Activated T-helper 1 cell treated with anti-CD3 and anti-CD28 coated beads, Interleukin-12 subunit alpha, Interleukin-12 subunit beta, Interleukin-2, Interleukin-4 antibody, amounts not matched to agents 30 ng/mL and 10 ng/mL and 1 ng/mL, durations not matched to agents 14 hours and 24 hours and 36 hours (primary cell): ENCODE measurements at regions of chr12 and their contacts with region 1.

Region 1: GRCh38 chr12:62301080-62301798 is 41.0 kb downstream of the USP15 start:
- DNase-seq: no peak
- H3K4me3 Mint-ChIP-seq: no peak overlapping the region
- H3K27ac Mint-ChIP-seq: peak overlapping the region; percentile 40
- H3K4me1 Mint-ChIP-seq: peaks cover 52% of the 10 kb centered on the region
- H3K27me3 Mint-ChIP-seq: no peaks in the 10 kb centered on the region

Region 2: DNA sequence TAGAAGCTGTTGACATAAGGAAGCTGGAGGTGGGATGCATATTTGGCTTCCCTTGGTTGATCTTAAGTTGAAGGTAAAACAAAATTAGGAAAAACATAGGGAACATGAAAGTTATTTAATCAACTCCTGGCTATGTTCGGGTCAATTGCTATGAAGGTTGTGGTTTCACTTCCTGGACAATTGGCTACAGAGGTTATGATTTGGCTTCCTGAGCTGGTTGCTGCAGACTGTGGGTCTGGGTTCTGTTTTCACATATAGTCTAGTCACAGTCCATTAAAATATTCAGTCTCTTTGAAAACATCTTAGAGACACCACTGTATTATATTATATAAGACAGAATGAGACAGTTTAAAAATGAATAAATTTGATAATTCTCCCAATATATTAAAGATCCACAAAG is 936.2 kb before region 1 on chr12:
- intact Hi-C with region 1: no loop called
- DNase-seq: no peak
- H3K4me3 Mint-ChIP-seq: no peak overlapping the region
- H3K27ac Mint-ChIP-seq: no peak overlapping the region
- H3K4me1 Mint-ChIP-seq: no peaks in the 10 kb centered on the region
- H3K27me3 Mint-ChIP-seq: no peaks in the 10 kb centered on the region

Region 3: GRCh38 chr12:62282057-62282774 is 19.0 kb before region 1 on chr12:
- intact Hi-C with region 1: loop called (anchors 2 kb)
- DNase-seq: no peak
- H3K4me3 Mint-ChIP-seq: no peak overlapping the region
- H3K27ac Mint-ChIP-seq: no peak overlapping the region
- H3K4me1 Mint-ChIP-seq: peaks cover 72% of the 10 kb centered on the region
- H3K27me3 Mint-ChIP-seq: no peaks in the 10 kb centered on the region

Region 4: DNA sequence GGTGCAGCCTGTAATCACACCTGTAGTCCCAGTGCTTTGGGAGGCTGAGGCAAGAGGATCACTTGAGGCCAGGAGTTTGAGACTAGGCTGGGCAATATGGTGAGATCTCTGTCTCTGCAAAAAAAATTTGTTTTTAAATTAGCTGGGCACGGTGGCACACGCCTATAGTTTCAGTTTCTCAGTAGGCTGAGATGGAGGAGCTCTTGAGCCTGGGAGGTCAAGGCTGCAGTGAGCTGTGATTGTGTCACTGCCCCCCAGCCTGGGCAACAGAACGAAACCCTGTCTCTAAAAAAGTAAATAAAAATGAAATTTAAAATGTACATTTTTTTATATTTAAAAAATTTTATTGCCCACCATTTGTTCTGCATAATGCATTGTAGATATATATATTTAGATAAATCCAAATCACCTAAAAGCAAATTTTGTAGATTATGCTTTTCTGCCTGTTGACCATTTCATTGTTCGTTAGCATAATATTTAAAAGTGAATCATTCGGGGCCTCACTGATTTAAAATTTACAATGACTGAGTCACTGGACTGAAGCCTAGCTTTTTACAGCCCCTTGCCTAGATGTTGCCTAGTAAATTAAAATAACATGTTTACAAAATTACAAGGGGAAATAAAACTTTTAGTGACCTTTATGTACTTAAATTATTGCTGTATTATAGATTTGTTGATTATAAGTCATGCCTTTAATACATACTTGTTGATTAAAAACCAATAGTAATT is 46.8 kb after region 1 on chr12:
- intact Hi-C with region 1: loop called (anchors 5 kb)
- DNase-seq: no peak
- H3K4me3 Mint-ChIP-seq: no peak overlapping the region
- H3K27ac Mint-ChIP-seq: no peak overlapping the region
- H3K4me1 Mint-ChIP-seq: peaks cover 7% of the 10 kb centered on the region
- H3K27me3 Mint-ChIP-seq: no peaks in the 10 kb centered on the region